ENCODE measurements at regions of chr5 and their contacts with region 1.

Region 1: GRCh38 chr5:132180134-132180745 is 47.4 kb downstream of the P4HA2 start:
- DNase-seq: no peak
- H3K4me3 ChIP-seq: no peak overlapping the region
- H3K27ac ChIP-seq: no peak overlapping the region
- H3K4me1 ChIP-seq: no peaks in the 10 kb centered on the region
- H3K27me3 ChIP-seq: no peaks in the 10 kb centered on the region
- CTCF ChIP-seq: peak; percentile 42 to 80 (median 73)

Region 2: DNA sequence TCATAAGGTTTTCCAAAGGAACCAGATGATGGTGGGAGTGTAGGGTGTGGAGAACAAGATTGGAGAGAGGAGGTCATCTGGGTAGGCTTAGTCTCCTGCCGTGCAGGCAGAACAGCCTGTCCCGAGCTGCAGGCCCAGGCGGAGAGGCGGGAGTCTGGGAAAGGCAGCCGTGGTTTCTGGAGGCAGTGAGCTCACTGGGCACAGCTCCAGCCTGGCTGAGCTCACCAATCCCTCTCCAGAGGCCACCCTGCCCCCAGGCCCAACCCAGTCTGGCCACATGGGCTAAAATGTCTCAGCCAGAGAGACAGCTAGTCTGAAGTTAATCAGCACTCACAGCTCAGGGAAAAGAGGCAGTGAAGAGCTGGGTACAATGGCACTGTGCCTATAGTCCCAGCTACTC is 35.1 kb after region 1 on chr5:
- intact Hi-C with region 1: loop called (anchors 5 kb)
- DNase-seq: peak; percentile 92 to 98
- H3K4me3 ChIP-seq: no peak overlapping the region
- H3K27ac ChIP-seq: peak overlapping the region; percentile 96 to 97
- H3K4me1 ChIP-seq: peaks cover 6 to 20% of the 10 kb centered on the region in 2 donors
- H3K27me3 ChIP-seq: no peaks in the 10 kb centered on the region
- CTCF ChIP-seq: no peak

Region 3: DNA sequence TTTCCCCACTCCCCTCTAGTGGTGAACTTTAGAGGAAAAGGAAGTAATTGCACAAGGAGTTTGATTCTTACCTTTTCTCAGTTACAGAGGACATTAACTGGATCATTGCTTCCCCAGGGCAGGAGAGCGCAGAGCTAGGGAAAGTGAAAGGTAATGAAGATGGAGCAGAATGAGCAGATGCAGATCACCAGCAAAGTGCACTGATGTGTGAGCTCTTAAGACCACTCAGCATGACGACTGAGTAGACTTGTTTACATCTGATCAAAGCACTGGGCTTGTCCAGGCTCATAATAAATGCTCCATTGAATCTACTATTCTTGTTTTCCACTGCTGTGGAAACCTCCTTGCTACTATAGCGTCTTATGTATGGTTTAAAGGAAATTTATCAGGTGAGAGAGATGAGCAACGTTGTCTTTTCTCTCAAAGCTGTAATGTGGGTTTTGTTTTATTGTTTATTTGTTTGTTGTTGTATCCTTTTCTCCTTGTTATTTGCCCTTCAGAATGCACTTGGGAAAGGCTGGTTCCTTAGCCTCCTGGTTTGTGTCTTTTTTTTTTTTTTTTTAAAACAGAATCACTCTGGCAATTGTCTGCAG is 214.5 kb after region 1 on chr5:
- intact Hi-C with region 1: no loop called
- DNase-seq: no peak
- H3K4me3 ChIP-seq: no peak overlapping the region
- H3K27ac ChIP-seq: no peak overlapping the region
- H3K4me1 ChIP-seq: peaks cover 0 to 5% of the 10 kb centered on the region in 2 donors
- H3K27me3 ChIP-seq: no peaks in the 10 kb centered on the region
- CTCF ChIP-seq: no peak

Region 4: GRCh38 chr5:132500931-132501630 is 320.8 kb after region 1 on chr5:
- intact Hi-C with region 1: loop called (anchors 10 kb)
- DNase-seq: peak in 1 of 2 donors; percentile 70
- H3K4me3 ChIP-seq: no peak overlapping the region
- H3K27ac ChIP-seq: peak overlapping the region; percentile 16 to 32
- H3K4me1 ChIP-seq: peaks cover 15 to 19% of the 10 kb centered on the region in 2 donors
- H3K27me3 ChIP-seq: no peaks in the 10 kb centered on the region
- CTCF ChIP-seq: peak; percentile 78 to 86 (median 79)

Measured in ascending aorta (tissue), 2 donors.